ENCODE measurements at regions of chr2 and their contacts with region 1.

Region 1: GRCh38 chr2:137838255-137839092 is 125.8 kb upstream of the HNMT start:
- DNase-seq: no peak
- H3K4me3 Mint-ChIP-seq: no peak overlapping the region
- H3K27ac Mint-ChIP-seq: no peak overlapping the region
- H3K4me1 Mint-ChIP-seq: no peaks in the 10 kb centered on the region
- H3K27me3 Mint-ChIP-seq: peaks cover 10% of the 10 kb centered on the region

Region 2: GRCh38 chr2:136423516-136423996 is 1414.9 kb before region 1 on chr2:
- CTCF ChIA-PET with region 1: interaction called, 5 read pairs
- intact Hi-C with region 1: loop called (anchors 1 kb)
- DNase-seq: peak; percentile 88
- H3K4me3 Mint-ChIP-seq: peak overlapping the region; percentile 76
- H3K27ac Mint-ChIP-seq: no peak overlapping the region
- H3K4me1 Mint-ChIP-seq: peaks cover 19% of the 10 kb centered on the region
- H3K27me3 Mint-ChIP-seq: peaks cover 22% of the 10 kb centered on the region

Region 3: GRCh38 chr2:136874258-136874657 is 964.2 kb before region 1 on chr2:
- CTCF ChIA-PET with region 1: interaction called, 3 read pairs
- intact Hi-C with region 1: loop called (anchors 5 kb)
- DNase-seq: no peak
- H3K4me3 Mint-ChIP-seq: no peak overlapping the region
- H3K27ac Mint-ChIP-seq: no peak overlapping the region
- H3K4me1 Mint-ChIP-seq: no peaks in the 10 kb centered on the region
- H3K27me3 Mint-ChIP-seq: peaks cover 2% of the 10 kb centered on the region

Region 4: GRCh38 chr2:136932700-136933099 is 905.8 kb before region 1 on chr2:
- CTCF ChIA-PET with region 1: interaction called, 4 read pairs
- intact Hi-C with region 1: loop called (anchors 10 kb)
- DNase-seq: no peak
- H3K4me3 Mint-ChIP-seq: no peak overlapping the region
- H3K27ac Mint-ChIP-seq: no peak overlapping the region
- H3K4me1 Mint-ChIP-seq: no peaks in the 10 kb centered on the region
- H3K27me3 Mint-ChIP-seq: peaks cover 3% of the 10 kb centered on the region

Region 5: DNA sequence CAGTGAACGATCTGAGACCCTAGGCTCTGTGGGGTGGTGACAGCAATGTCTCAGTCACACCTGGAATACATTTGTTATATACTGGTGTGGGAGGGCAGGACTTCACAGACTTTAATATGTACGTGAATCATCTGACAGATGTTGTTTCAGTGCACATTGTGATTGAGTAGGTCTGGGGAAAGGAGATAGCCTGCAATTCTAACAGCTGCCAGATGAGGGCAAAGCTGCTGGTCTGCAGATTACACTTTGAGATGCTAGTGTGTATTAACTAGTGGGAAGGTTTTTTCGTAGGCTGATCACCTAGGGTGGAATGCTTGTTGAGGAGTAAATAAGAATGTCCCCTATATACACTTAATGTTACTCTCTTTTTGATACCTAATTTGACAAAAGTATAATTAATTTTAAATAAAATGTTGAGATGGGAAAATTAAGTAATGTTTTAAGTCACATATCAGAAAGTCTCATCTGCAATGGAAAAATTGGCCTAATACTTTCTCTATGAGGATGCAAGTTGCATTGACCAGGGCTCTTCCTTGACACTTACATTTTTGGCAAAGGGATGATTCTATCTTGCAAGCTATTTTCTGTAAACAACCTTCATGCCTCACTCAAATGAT is 371.1 kb before region 1 on chr2:
- CTCF ChIA-PET with region 1: interaction called, 6 read pairs
- intact Hi-C with region 1: loop called (anchors 1 kb)
- DNase-seq: peak; percentile 14
- H3K4me3 Mint-ChIP-seq: no peak overlapping the region
- H3K27ac Mint-ChIP-seq: no peak overlapping the region
- H3K4me1 Mint-ChIP-seq: no peaks in the 10 kb centered on the region
- H3K27me3 Mint-ChIP-seq: no peaks in the 10 kb centered on the region

Region 6: DNA sequence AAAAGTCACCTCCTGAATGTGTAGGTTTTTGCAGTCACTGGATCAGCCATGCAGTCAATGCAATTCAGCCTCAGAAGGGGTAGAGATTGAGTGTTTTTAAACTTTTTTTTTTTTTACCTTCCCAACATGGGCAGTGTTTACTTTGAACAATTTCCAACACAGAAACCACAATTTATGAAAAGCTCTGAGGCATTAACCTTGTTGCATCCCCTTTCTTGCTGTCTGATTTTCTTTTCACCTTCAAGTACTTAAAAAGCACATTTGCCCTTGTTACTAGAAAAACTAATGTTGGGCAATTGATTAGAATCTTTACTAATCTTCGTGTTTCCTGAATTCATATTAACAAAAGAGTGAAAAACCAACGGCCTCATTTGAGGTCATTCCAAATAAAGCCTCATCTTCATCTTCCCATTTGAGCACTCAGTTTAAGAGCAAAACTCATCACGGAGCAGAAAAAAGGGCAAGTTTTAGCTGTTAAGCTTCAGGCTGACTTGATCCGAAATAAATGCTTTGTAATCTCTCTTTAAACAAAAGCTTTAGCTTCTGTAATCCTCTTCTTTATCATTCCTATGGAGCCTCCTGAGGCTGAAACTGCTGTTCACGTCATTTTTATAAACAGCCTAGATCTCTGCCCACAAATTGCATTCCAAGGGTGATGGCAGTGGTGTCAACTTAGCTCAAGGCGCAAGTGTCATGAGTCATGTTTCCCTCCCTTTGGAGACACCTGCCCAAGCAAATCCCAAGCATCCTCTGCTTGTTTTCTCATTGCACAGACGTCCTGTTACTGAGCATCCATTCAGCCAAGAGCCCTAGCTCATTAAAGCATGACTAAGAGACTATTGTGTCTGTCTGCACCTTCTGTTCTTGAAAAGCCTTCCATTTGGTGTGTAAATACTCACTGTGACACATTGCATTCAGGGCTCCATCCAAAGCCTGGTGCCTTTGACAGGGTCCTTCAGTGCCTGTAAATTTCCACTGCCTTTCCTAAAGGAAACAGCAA is 233.5 kb after region 1 on chr2:
- CTCF ChIA-PET with region 1: no interaction called
- intact Hi-C with region 1: no loop called
- DNase-seq: no peak
- H3K4me3 Mint-ChIP-seq: no peak overlapping the region
- H3K27ac Mint-ChIP-seq: no peak overlapping the region
- H3K4me1 Mint-ChIP-seq: no peaks in the 10 kb centered on the region
- H3K27me3 Mint-ChIP-seq: peaks cover 5% of the 10 kb centered on the region

Region 7: DNA sequence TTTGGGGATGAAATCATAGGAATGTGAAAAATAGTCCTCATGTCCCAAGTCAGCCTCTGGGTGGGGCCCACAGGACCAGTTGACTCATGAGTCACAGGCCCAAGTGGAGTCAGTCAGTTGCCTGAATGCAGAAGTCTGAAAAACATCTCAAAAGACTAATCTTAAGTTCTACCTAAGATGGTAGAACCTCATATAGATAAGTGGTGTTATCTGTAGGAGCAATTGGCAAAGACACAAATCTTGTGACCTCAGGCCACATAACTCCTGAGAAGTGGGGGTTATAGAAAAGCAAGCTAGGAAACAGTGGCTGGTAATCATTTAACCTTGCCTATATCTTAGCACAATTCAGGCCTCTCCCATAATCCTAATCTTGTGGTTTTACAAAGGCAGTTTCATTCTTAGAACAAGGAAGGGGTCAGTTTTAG is 406.0 kb after region 1 on chr2:
- CTCF ChIA-PET with region 1: no interaction called
- intact Hi-C with region 1: no loop called
- DNase-seq: no peak
- H3K4me3 Mint-ChIP-seq: no peak overlapping the region
- H3K27ac Mint-ChIP-seq: no peak overlapping the region
- H3K4me1 Mint-ChIP-seq: no peaks in the 10 kb centered on the region
- H3K27me3 Mint-ChIP-seq: no peaks in the 10 kb centered on the region